ENCODE measurements at regions of chr1 and their contacts with region 1.

Region 1: DNA sequence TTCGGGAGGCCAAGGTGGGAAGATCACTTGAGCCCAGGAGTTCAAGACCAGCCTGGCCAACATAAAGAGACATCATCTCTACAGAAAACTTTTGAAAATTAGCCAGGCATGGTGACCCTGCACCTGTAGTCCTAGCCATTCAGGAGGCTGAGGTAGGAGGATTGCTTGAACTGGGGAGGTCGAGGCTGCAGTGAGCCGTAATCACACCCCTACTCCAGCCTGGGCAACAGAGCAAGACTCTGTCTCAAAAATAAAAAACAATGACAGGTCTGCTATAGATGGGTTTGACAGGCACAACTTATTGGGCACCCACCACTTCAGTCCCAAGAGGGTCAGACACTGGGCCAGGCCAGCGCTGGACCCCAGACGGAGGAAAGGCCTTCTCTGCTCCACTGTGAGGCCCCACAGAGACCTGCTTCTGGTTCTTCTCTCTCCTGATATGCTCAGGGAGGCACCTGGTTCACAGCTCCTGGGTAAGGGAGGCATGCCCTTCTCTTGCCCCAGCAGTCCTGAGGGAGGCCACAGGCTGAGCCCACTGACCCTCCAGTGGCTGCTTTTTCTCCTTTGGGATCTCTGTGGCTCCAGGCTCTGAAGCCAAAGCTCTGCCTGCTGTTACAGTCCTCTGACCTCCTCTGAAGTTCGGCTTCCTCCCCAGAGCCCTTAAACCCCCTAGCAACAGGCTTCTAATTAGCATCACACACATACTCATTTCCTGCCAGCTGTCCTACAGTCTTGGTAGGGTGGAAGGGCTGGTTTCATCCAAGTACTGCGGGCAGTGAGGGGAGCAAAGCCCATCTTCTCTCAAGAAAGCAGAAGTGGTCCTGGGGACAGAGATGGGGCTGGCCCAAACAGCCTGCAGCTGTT is 14.4 kb downstream of the S100A16 start:
- DNase-seq: no peak
- ATAC-seq: peak in 1 of 2 donors; percentile 33
- H3K4me3 ChIP-seq: no peak overlapping the region
- H3K27ac ChIP-seq: no peak overlapping the region
- H3K4me1 ChIP-seq: no peaks in the 10 kb centered on the region
- H3K27me3 ChIP-seq: no peaks in the 10 kb centered on the region
- CTCF ChIP-seq: no peak
- POLR2A ChIP-seq: no peak

Region 2: GRCh38 chr1:153727463-153728304 is 129.1 kb after region 1 on chr1 and contains the start of gene INTS3:
- in situ Hi-C with region 1: loop called in 1 of 4 experiments (anchors 25 kb)
- intact Hi-C with region 1: no loop called
- DNase-seq: peak; percentile 100
- ATAC-seq: peak; percentile 99 to 100
- H3K4me3 ChIP-seq: peak within 1 kb of the TSS; percentile 77 to 96 (median 88)
- H3K27ac ChIP-seq: peak within 1 kb of the TSS; percentile 95 to 100 (median 98)
- H3K4me1 ChIP-seq: peaks cover 20 to 24% of the 10 kb centered on the region in 2 donors
- H3K27me3 ChIP-seq: no peaks in the 10 kb centered on the region
- CTCF ChIP-seq: peak in 2 of 5 experiments; percentile 12 to 32
- POLR2A ChIP-seq: peak; percentile 42 to 52
- total RNA-seq, gene INTS3: 16.1 to 28.0 (median 19.9) TPM

Measured in gastrocnemius medialis (tissue), 4 donors.